Dendritic cell treated with granulocyte-macrophage colony-stimulating factor and Interleukin-4, amounts not matched to agents 40 ng/mL and 50 ng/mL, for 4 days (primary cell): ENCODE measurements at regions of chr4 and their contacts with region 1.

Region 1: GRCh38 chr4:176444741-176445140 is 125.0 kb downstream of the SPCS3 start:
- H3K4me3 Mint-ChIP-seq: no peak overlapping the region
- H3K27ac Mint-ChIP-seq: no peak overlapping the region
- H3K4me1 Mint-ChIP-seq: no peaks in the 10 kb centered on the region
- H3K27me3 Mint-ChIP-seq: no peaks in the 10 kb centered on the region

Region 2: GRCh38 chr4:176413171-176413570 is 31.6 kb before region 1 on chr4:
- intact Hi-C with region 1: no loop called
- H3K4me3 Mint-ChIP-seq: no peak overlapping the region
- H3K27ac Mint-ChIP-seq: no peak overlapping the region
- H3K4me1 Mint-ChIP-seq: no peaks in the 10 kb centered on the region
- H3K27me3 Mint-ChIP-seq: no peaks in the 10 kb centered on the region

Region 3: GRCh38 chr4:176425035-176425434 is 19.7 kb before region 1 on chr4:
- intact Hi-C with region 1: no loop called
- H3K4me3 Mint-ChIP-seq: no peak overlapping the region
- H3K27ac Mint-ChIP-seq: no peak overlapping the region
- H3K4me1 Mint-ChIP-seq: no peaks in the 10 kb centered on the region
- H3K27me3 Mint-ChIP-seq: no peaks in the 10 kb centered on the region

Region 4: GRCh38 chr4:176817204-176817603 is 372.5 kb after region 1 on chr4:
- intact Hi-C with region 1: loop called (anchors 5 kb)
- H3K4me3 Mint-ChIP-seq: no peak overlapping the region
- H3K27ac Mint-ChIP-seq: no peak overlapping the region
- H3K4me1 Mint-ChIP-seq: no peaks in the 10 kb centered on the region
- H3K27me3 Mint-ChIP-seq: no peaks in the 10 kb centered on the region